ENCODE measurements at regions of chr4 and their contacts with region 1.

Region 1: DNA sequence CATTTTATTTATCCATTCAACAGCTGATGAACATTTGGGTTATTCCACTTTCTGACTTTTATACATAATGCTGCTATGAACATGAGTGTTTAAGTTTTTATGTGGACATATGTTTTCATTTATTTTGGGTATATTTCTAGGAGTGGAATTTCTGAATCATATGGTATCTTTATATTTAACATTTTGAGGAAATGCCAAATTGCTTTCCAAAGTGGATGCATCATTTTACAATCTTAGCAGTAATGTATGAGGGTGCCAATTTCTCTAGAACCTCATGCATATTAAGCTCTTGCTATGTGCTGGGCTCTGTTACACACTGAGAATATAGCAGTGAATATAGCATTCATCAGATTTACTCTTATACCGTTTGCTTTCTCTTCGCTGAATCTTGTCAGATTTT is 983.7 kb downstream of the STIM2 start:
- DNase-seq: no peak
- H3K4me3 ChIP-seq: no peak overlapping the region
- H3K4me3 Mint-ChIP-seq: no peak overlapping the region
- H3K27ac Mint-ChIP-seq: no peak overlapping the region
- H3K4me1 ChIP-seq: no peaks in the 10 kb centered on the region
- H3K4me1 Mint-ChIP-seq: no peaks in the 10 kb centered on the region
- H3K27me3 ChIP-seq: no peaks in the 10 kb centered on the region
- H3K27me3 Mint-ChIP-seq: no peaks in the 10 kb centered on the region
- CTCF ChIP-seq: no peak

Region 2: GRCh38 chr4:27684610-27685011 is 159.8 kb before region 1 on chr4:
- CTCF ChIA-PET with region 1: no interaction called
- POLR2A ChIA-PET with region 1: no interaction called
- intact Hi-C with region 1: loop called (anchors 10 kb)
- DNase-seq: peak; percentile 63 to 73
- H3K4me3 ChIP-seq: no peak overlapping the region
- H3K4me3 Mint-ChIP-seq: no peak overlapping the region
- H3K27ac Mint-ChIP-seq: no peak overlapping the region
- H3K4me1 ChIP-seq: no peaks in the 10 kb centered on the region
- H3K4me1 Mint-ChIP-seq: no peaks in the 10 kb centered on the region
- H3K27me3 ChIP-seq: no peaks in the 10 kb centered on the region
- H3K27me3 Mint-ChIP-seq: peaks cover 5% of the 10 kb centered on the region
- CTCF ChIP-seq: peak; percentile 72 to 73

Region 3: DNA sequence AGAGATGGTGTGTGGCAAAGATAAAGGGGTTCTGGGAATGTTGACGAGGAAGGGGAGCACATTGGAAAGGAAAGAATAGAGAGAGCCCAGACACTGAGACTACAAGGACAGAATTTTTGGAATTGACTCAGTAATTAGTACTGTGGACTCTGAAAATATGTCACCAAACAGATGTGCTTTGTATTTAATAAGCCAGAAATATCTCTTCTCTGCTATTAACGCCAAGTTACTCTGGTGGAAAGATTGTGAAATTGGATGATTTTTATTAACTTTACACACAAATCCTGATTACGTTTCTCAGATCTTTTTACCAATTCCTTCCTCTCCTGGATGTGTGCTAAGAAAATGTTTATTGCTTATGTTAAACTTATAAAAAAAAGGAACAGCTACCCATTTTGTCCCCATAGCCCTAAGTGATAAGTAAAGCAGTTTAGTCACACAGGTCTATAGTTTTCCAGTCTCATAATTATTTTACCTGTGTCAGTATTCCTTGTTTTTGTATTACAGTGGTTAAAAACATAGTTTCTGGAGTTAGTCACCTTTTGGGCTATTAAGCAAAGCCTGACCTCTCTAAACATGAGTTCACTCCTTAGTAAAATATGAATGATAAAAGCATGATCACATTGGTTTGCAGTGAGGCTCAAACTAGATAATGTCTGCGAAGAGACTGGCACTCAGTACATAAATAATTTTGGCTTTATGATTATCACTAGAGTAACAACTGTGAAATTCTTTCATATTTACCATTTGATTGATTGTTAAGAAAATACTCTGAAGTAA is 84.6 kb after region 1 on chr4:
- CTCF ChIA-PET with region 1: no interaction called
- POLR2A ChIA-PET with region 1: no interaction called
- intact Hi-C with region 1: no loop called
- DNase-seq: no peak
- H3K4me3 ChIP-seq: no peak overlapping the region
- H3K4me3 Mint-ChIP-seq: no peak overlapping the region
- H3K27ac Mint-ChIP-seq: no peak overlapping the region
- H3K4me1 ChIP-seq: no peaks in the 10 kb centered on the region
- H3K4me1 Mint-ChIP-seq: no peaks in the 10 kb centered on the region
- H3K27me3 ChIP-seq: no peaks in the 10 kb centered on the region
- H3K27me3 Mint-ChIP-seq: no peaks in the 10 kb centered on the region
- CTCF ChIP-seq: no peak

Measured in Caco-2 (cell line).